A549 (cell line): ENCODE measurements at regions of chr12 and their contacts with region 1.

Region 1: GRCh38 chr12:62603061-62603810 is 136.6 kb downstream of the MON2 start:
- DNase-seq: peak; percentile 61 to 89
- ATAC-seq: peak; percentile 84 to 85
- H3K4me3 ChIP-seq: peak overlapping the region; percentile 65
- H3K27ac ChIP-seq: peak overlapping the region; percentile 98
- H3K4me1 ChIP-seq: peaks cover 56% of the 10 kb centered on the region
- CTCF ChIP-seq: peak; percentile 41
- EP300 ChIP-seq: no peak
- POLR2A ChIP-seq: peak; percentile 68
- RAD21 ChIP-seq: peak; percentile 34 to 50; a peak in 4 of 5 replicates

Region 2: GRCh38 chr12:62581288-62582064 is 21.8 kb before region 1 on chr12:
- CTCF ChIA-PET with region 1: interaction called, 19 read pairs
- POLR2A ChIA-PET with region 1: interaction called, 7 read pairs
- DNase-seq: peak; percentile 40 to 74
- ATAC-seq: peak; percentile 85 to 94
- H3K4me3 ChIP-seq: no peak overlapping the region
- H3K27ac ChIP-seq: peak overlapping the region; percentile 20 to 77
- H3K4me1 ChIP-seq: peaks cover 27% of the 10 kb centered on the region
- CTCF ChIP-seq: peak; percentile 83
- EP300 ChIP-seq: no peak
- POLR2A ChIP-seq: no peak
- RAD21 ChIP-seq: peak; percentile 88 to 90

Region 3: GRCh38 chr12:62724947-62725447 is 121.8 kb after region 1 on chr12:
- CTCF ChIA-PET with region 1: interaction called, 5 read pairs
- POLR2A ChIA-PET with region 1: interaction called, 27 read pairs
- DNase-seq: peak; percentile 71 to 97
- ATAC-seq: peak; percentile 91 to 95
- H3K4me3 ChIP-seq: no peak overlapping the region
- H3K27ac ChIP-seq: peak overlapping the region; percentile 94 to 98
- H3K4me1 ChIP-seq: peaks cover 92% of the 10 kb centered on the region
- CTCF ChIP-seq: no peak
- EP300 ChIP-seq: peak; percentile 75 to 91; a peak in 3 of 5 replicates
- POLR2A ChIP-seq: no peak
- RAD21 ChIP-seq: peak; percentile 51 to 54

Region 4: DNA sequence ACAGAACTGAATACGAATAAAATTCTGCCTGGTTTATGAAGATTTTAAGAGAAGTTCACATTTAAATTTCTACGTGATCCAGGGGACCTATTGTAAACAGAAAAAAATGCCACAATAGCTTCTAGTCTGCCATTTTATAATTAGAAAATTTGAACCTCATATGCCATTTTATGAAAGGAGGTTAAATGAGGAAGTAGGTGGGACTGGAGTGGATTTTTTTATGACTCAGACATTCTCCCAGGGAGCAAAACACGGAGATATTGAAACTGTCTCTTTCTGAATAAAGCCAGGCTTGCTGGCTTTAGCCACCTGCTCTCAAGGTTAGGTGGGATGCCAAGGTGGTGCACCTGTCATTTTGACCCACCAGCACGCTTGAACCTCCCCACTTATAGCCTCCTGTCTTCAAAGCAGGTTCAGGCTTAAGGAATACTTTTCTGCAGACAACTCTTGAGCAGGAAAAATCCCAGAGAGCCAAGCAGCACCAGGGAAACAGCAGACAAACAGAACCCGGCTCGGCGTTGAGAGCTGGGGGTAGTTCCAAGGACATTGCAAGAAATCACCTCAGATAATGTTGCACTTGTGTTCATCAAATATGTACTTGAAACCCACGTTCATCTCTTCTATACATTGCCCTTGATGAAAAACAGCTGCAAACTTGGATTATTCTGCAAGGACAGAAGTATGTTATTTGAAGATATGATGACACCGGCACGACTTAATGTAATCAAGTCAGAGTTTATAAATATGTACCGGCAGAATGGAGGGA is 128.0 kb after region 1 on chr12:
- CTCF ChIA-PET with region 1: interaction called, 5 read pairs
- POLR2A ChIA-PET with region 1: interaction called, 27 read pairs
- DNase-seq: peak; percentile 66 to 79
- ATAC-seq: peak; percentile 29 to 51
- H3K4me3 ChIP-seq: 0 out of 3 replicates have a peak overlapping the region, but pooled peaks have one; percentile 0
- H3K27ac ChIP-seq: peak overlapping the region; percentile 94 to 98
- H3K4me1 ChIP-seq: peaks cover 92% of the 10 kb centered on the region
- CTCF ChIP-seq: no peak
- EP300 ChIP-seq: 0 out of 5 replicates have a peak, but pooled peaks of 1 of the 2 experiments have one; percentile 2
- POLR2A ChIP-seq: peak; percentile 15; the same call in 1 of the 2 replicates
- RAD21 ChIP-seq: peak in 1 of 2 experiments; percentile 1; a peak in 2 of 5 replicates

Region 5: DNA sequence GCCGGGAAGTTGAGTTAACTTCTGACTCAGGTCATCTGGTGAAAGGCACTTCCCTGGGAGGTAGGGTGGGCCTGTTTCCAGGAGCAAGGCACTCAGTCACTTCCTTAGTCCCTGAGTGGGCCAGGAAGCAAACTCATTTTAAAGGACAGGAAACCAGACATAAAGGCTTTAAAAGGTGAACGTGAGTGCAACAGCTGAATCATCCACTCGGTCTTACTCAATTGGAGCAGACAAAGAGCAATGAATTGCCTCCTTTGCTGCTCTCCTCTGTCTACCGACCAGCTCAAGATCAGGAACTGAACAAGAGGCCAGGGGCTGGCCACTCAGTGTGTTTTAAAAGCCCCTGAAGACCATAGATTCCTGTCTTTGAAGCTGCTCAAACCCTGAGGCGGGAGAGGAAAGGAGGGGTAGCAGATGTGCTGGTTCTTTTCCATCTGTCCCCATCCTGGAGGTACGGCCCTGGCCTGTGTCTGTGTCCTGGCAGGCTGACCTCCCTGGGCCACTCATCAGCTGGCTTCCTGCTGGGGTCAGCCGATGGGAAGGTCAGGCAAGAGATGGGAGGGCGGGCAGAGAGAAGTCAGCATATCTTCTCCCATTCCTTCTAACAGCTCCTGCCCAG is 182.8 kb after region 1 on chr12:
- CTCF ChIA-PET with region 1: interaction called, 16 read pairs
- POLR2A ChIA-PET with region 1: interaction called, 34 read pairs
- DNase-seq: peak; percentile 82 to 99
- ATAC-seq: peak; percentile 93
- H3K4me3 ChIP-seq: no peak overlapping the region
- H3K27ac ChIP-seq: peak overlapping the region; percentile 91 to 94
- H3K4me1 ChIP-seq: peaks cover 64% of the 10 kb centered on the region
- CTCF ChIP-seq: no peak
- EP300 ChIP-seq: peak; percentile 92 to 96; a peak in 4 of 5 replicates
- POLR2A ChIP-seq: peak; percentile 25
- RAD21 ChIP-seq: peak; percentile 31 to 63; a peak in 4 of 5 replicates

Region 6: DNA sequence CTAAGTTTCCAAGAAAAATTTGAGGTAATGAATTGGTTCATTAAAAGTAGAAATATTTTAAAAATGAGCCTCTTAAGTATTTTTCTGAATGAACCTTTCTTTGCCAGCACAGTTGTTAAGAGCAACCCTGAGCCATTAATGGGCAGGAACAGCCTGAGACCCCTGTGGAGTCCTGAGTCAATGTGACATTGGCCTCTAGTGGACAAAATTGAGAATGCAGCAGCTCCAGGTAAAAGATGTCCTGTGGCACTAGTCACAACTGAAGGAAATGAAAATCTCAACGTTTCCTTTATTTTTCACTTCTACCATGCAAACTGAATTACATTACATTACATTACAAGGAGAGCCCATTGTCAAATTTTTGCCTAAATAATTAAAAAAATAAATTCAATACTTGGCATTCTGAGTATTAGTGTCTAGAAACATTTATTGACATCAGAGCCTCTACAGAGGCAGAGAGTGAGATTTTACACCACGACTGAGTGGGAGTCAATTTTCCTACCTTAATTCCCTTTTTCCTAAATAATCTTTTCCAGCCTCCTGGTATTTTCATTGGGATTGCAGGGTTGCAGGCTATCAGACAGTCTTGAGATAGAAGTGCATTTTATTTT is 196.0 kb after region 1 on chr12:
- CTCF ChIA-PET with region 1: interaction called, 44 read pairs
- POLR2A ChIA-PET with region 1: interaction called, 19 read pairs
- DNase-seq: peak; percentile 60 to 83
- ATAC-seq: peak; percentile 76 to 92
- H3K4me3 ChIP-seq: no peak overlapping the region
- H3K27ac ChIP-seq: peak overlapping the region; percentile 40 to 70
- H3K4me1 ChIP-seq: peaks cover 26% of the 10 kb centered on the region
- CTCF ChIP-seq: peak; percentile 94
- EP300 ChIP-seq: no peak
- POLR2A ChIP-seq: no peak
- RAD21 ChIP-seq: peak; percentile 94 to 98